ENCODE measurements at regions of chr21 and their contacts with region 1.

Region 1: DNA sequence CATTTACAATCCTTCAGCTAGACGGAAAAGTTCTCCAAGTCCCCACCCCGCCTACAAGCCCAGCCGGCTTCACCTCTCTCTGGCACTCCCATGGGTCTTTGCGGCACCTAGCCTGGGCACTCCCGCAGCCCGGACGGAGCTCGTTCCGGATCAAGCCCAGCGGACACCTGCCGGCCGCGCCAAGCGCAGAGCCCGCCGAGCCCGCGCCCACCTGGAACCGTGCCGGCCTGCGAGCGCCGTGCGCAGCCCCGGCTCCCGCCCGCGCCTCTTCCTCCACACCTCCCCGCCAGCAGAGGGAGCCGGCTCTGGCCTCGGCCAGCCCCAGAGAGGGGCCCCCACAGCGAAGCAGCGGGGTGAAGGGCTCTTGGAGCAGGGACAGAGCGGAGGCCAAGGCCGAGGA is 50.0 kb upstream of the KRTAP19-8 start:
- DNase-seq: no peak
- ATAC-seq: no peak
- H3K4me3 Mint-ChIP-seq: no peak overlapping the region
- H3K27ac Mint-ChIP-seq: no peak overlapping the region
- H3K4me1 Mint-ChIP-seq: peaks cover 5% of the 10 kb centered on the region
- H3K27me3 Mint-ChIP-seq: peaks cover 1% of the 10 kb centered on the region
- CTCF ChIP-seq: no peak

Region 2: DNA sequence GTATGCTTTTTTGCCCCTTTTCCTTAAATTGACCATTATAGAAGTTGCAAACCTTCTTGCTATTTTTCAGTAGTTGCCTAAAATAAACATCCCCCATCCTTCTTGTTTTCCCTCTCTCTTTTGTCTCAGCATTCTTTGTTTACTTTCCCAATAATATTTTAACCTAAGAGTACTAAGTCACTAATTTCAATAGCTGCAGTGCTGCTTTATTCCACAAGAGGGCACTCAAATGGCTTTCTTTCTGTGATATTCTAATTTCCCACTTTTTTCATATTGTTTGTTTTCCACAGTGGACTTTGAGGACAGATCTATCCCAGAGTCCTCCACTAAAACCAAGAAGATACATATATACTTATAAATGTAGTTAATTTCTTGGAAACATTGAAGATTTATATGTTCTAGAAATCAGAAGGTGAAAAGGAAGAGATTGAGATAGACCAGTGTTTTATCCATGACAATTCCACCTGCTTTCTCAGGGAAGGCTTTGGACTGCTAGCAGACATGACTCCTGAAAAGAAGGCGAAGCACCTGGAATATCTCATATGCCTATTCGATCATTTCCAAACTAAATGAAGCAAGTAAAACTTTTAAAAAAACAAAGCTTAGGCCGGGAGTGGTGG is 1043.8 kb before region 1 on chr21:
- CTCF ChIA-PET with region 1: interaction called, 4 read pairs
- POLR2A ChIA-PET with region 1: no interaction called
- intact Hi-C with region 1: loop called (anchors 10 kb)
- DNase-seq: peak; percentile 10
- ATAC-seq: no peak
- H3K4me3 Mint-ChIP-seq: no peak overlapping the region
- H3K27ac Mint-ChIP-seq: no peak overlapping the region
- H3K4me1 Mint-ChIP-seq: no peaks in the 10 kb centered on the region
- H3K27me3 Mint-ChIP-seq: peaks cover 4% of the 10 kb centered on the region
- CTCF ChIP-seq: peak; percentile 93

Region 3: DNA sequence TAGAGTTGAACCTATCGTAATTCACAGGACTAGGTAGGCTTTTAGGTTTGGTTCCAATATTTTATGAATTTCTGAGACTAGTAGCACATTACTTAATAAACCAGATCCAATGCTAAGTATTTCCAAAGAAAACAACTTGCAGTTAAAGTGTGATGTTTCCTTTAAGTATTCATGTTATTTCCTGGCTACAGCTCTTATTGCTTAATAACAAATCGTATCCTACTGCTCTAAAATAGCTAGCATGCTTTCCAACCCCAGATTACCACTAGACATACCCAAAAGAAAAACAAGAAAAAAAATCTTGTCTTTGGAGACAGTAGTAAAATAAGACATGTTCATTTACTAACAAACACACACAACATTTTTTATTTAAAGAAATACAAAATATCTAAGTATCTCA is 751.7 kb before region 1 on chr21:
- CTCF ChIA-PET with region 1: interaction called, 6 read pairs
- POLR2A ChIA-PET with region 1: no interaction called
- intact Hi-C with region 1: loop called (anchors 5 kb)
- DNase-seq: no peak
- ATAC-seq: no peak
- H3K4me3 Mint-ChIP-seq: no peak overlapping the region
- H3K27ac Mint-ChIP-seq: no peak overlapping the region
- H3K4me1 Mint-ChIP-seq: no peaks in the 10 kb centered on the region
- H3K27me3 Mint-ChIP-seq: no peaks in the 10 kb centered on the region
- CTCF ChIP-seq: no peak

Region 4: GRCh38 chr21:30502041-30502440 is 586.3 kb before region 1 on chr21 and contains the start of gene KRTAP19-5:
- CTCF ChIA-PET with region 1: interaction called, 4 read pairs
- POLR2A ChIA-PET with region 1: no interaction called
- intact Hi-C with region 1: loop called (anchors 5 kb)
- DNase-seq: no peak
- ATAC-seq: no peak
- H3K4me3 Mint-ChIP-seq: no peak within 1 kb of the TSS
- H3K27ac Mint-ChIP-seq: no peak within 1 kb of the TSS
- H3K4me1 Mint-ChIP-seq: no peaks in the 10 kb centered on the region
- H3K27me3 Mint-ChIP-seq: peaks cover 3% of the 10 kb centered on the region
- CTCF ChIP-seq: no peak
- total RNA-seq, gene KRTAP19-5: not detected

Region 5: GRCh38 chr21:30831194-30831765 is 257.0 kb before region 1 on chr21:
- CTCF ChIA-PET with region 1: interaction called, 8 read pairs
- POLR2A ChIA-PET with region 1: no interaction called
- intact Hi-C with region 1: loop called (anchors 1 kb)
- DNase-seq: peak; percentile 65
- ATAC-seq: peak; percentile 55
- H3K4me3 Mint-ChIP-seq: no peak overlapping the region
- H3K27ac Mint-ChIP-seq: no peak overlapping the region
- H3K4me1 Mint-ChIP-seq: no peaks in the 10 kb centered on the region
- H3K27me3 Mint-ChIP-seq: peaks cover 10% of the 10 kb centered on the region
- CTCF ChIP-seq: peak; percentile 88

Region 6: GRCh38 chr21:30981403-30981802 is 106.9 kb before region 1 on chr21:
- CTCF ChIA-PET with region 1: no interaction called
- POLR2A ChIA-PET with region 1: no interaction called
- intact Hi-C with region 1: loop called (anchors 10 kb)
- DNase-seq: no peak
- ATAC-seq: no peak
- H3K4me3 Mint-ChIP-seq: no peak overlapping the region
- H3K27ac Mint-ChIP-seq: no peak overlapping the region
- H3K4me1 Mint-ChIP-seq: peaks cover 14% of the 10 kb centered on the region
- H3K27me3 Mint-ChIP-seq: peaks cover 5% of the 10 kb centered on the region
- CTCF ChIP-seq: no peak

Region 7: GRCh38 chr21:32991361-32991760 is 1903.0 kb after region 1 on chr21:
- CTCF ChIA-PET with region 1: no interaction called
- POLR2A ChIA-PET with region 1: no interaction called
- intact Hi-C with region 1: no loop called
- DNase-seq: no peak
- ATAC-seq: no peak
- H3K4me3 Mint-ChIP-seq: no peak overlapping the region
- H3K27ac Mint-ChIP-seq: no peak overlapping the region
- H3K4me1 Mint-ChIP-seq: no peaks in the 10 kb centered on the region
- H3K27me3 Mint-ChIP-seq: peaks cover 12% of the 10 kb centered on the region
- CTCF ChIP-seq: no peak

Measured in activated CD8-positive, alpha-beta T cell treated with anti-CD3 and anti-CD28 coated beads for 36 hours (primary cell).